GM12878 (cell line): ENCODE measurements at regions of chr11 and their contacts with region 1.

Region 1: DNA sequence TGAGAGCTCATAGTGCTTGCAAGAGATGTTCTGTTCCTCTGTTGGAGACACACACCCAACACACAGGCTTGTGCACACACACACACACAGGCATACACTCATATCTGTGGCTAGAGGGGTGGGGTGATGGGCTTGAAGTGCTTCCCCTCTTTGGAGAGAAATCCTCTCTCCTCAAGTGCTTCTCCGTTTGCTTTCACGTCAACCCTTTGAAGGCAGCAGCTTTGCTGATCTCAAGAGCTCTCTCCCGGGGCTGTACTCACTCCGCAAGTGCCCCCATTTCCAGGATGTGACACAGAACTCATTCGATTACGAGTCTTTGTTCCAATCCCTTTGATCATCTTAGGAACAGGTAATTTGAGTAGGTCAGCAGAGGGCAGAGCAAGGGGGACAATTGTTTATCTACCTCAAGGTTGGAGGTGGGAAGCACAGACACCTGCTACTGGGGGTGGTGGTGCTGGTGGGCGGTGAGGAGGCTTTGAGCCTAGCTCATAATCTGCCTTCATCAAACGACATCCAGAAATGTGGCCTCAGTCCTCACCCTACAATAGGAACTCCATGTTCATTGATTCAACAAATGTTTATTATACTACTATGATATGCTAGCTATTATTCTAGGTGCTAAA is 529.8 kb upstream of the CADM1 start:
- DNase-seq: no peak
- ATAC-seq: no peak
- H3K4me3 ChIP-seq: no peak overlapping the region
- H3K27ac ChIP-seq: no peak overlapping the region
- H3K4me1 ChIP-seq: peaks cover 6% of the 10 kb centered on the region; the same call in 1 of the 2 replicates
- H3K27me3 ChIP-seq: no peaks in the 10 kb centered on the region
- CTCF ChIP-seq: no peak
- EP300 ChIP-seq: no peak
- POLR2A ChIP-seq: no peak
- RAD21 ChIP-seq: no peak

Region 2: GRCh38 chr11:115869780-115870431 is 164.1 kb before region 1 on chr11:
- CTCF ChIA-PET with region 1: no interaction called
- POLR2A ChIA-PET with region 1: no interaction called
- RAD21 ChIA-PET with region 1: no interaction called
- SMC1A ChIA-PET with region 1: no interaction called
- in situ Hi-C with region 1: no loop called
- intact Hi-C with region 1: no loop called
- DNase-seq: peak; percentile 51
- ATAC-seq: peak; percentile 87
- H3K4me3 ChIP-seq: no peak overlapping the region
- H3K27ac ChIP-seq: no peak overlapping the region
- H3K4me1 ChIP-seq: peaks cover 49% of the 10 kb centered on the region
- H3K27me3 ChIP-seq: no peaks in the 10 kb centered on the region
- CTCF ChIP-seq: peak; percentile 80 to 90 (median 85)
- EP300 ChIP-seq: peak in 1 of 2 experiments; percentile 24; a peak in 1 of 4 replicates
- POLR2A ChIP-seq: no peak
- RAD21 ChIP-seq: peak; percentile 77

Region 3: GRCh38 chr11:115896084-115896483 is 138.0 kb before region 1 on chr11:
- CTCF ChIA-PET with region 1: no interaction called
- POLR2A ChIA-PET with region 1: no interaction called
- RAD21 ChIA-PET with region 1: no interaction called
- SMC1A ChIA-PET with region 1: no interaction called
- in situ Hi-C with region 1: no loop called
- intact Hi-C with region 1: no loop called
- DNase-seq: no peak
- ATAC-seq: peak; percentile 44
- H3K4me3 ChIP-seq: no peak overlapping the region
- H3K27ac ChIP-seq: no peak overlapping the region
- H3K4me1 ChIP-seq: peaks cover 14% of the 10 kb centered on the region
- H3K27me3 ChIP-seq: no peaks in the 10 kb centered on the region
- CTCF ChIP-seq: no peak
- EP300 ChIP-seq: no peak
- POLR2A ChIP-seq: no peak
- RAD21 ChIP-seq: no peak

Region 4: GRCh38 chr11:115996125-115996807 is 37.8 kb before region 1 on chr11:
- CTCF ChIA-PET with region 1: interaction called, 3 read pairs
- POLR2A ChIA-PET with region 1: no interaction called
- RAD21 ChIA-PET with region 1: no interaction called
- SMC1A ChIA-PET with region 1: interaction called, 3 read pairs
- in situ Hi-C with region 1: no loop called
- intact Hi-C with region 1: loop called (anchors 1 kb)
- DNase-seq: peak; percentile 89
- ATAC-seq: peak; percentile 96
- H3K4me3 ChIP-seq: no peak overlapping the region
- H3K27ac ChIP-seq: peak overlapping the region; percentile 79
- H3K4me1 ChIP-seq: peaks cover 25% of the 10 kb centered on the region
- H3K27me3 ChIP-seq: no peaks in the 10 kb centered on the region
- CTCF ChIP-seq: no peak
- EP300 ChIP-seq: peak; percentile 94 to 95; a peak in 3 of 4 replicates
- POLR2A ChIP-seq: no peak
- RAD21 ChIP-seq: no peak

Region 5: DNA sequence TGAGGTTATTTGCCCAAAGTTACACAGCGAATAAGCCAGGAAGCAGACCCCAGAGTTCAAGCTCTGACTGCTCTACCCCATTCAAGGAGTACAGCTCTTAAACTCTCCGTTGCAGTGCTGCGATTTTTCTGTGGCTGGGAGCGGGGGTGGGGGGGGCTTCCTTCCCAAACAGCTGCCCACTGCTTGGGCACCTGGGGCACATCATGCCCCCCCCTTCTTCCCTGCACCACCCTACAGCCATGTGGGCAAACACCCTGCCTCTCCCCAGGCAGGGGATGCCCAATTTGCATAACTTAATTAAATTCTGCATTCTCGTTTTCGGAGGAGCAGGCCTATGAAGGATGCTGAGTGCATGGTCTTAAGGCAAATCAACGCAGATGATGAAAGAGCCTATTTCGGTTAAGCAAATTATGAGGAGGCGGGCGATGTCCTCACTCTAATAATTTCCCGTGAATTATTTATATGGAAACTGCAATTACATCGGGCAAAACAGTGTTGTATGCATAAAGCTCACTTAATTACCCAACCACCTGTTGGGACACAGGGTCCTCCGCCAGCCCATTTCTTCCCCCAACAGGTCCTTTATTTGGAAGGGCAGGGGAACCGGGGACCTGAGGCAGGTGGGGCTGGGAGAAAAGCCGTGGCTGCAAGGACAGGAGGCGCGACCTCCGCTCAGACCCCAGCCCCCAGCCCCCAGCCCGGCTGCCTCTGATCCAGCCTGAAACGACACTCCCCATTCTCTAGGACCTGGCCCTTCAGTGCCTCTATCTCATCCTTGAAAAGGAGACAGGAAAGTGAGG is 128.2 kb after region 1 on chr11:
- CTCF ChIA-PET with region 1: no interaction called
- POLR2A ChIA-PET with region 1: no interaction called
- RAD21 ChIA-PET with region 1: no interaction called
- SMC1A ChIA-PET with region 1: no interaction called
- in situ Hi-C with region 1: no loop called
- intact Hi-C with region 1: no loop called
- DNase-seq: no peak
- ATAC-seq: no peak
- H3K4me3 ChIP-seq: no peak overlapping the region
- H3K27ac ChIP-seq: no peak overlapping the region
- H3K4me1 ChIP-seq: no peaks in the 10 kb centered on the region
- H3K27me3 ChIP-seq: no peaks in the 10 kb centered on the region
- CTCF ChIP-seq: no peak
- EP300 ChIP-seq: no peak
- POLR2A ChIP-seq: no peak
- RAD21 ChIP-seq: no peak

Region 6: GRCh38 chr11:116326146-116326679 is 292.2 kb after region 1 on chr11:
- CTCF ChIA-PET with region 1: no interaction called
- POLR2A ChIA-PET with region 1: no interaction called
- RAD21 ChIA-PET with region 1: no interaction called
- SMC1A ChIA-PET with region 1: no interaction called
- in situ Hi-C with region 1: no loop called
- intact Hi-C with region 1: no loop called
- DNase-seq: no peak
- ATAC-seq: no peak
- H3K4me3 ChIP-seq: no peak overlapping the region
- H3K27ac ChIP-seq: no peak overlapping the region
- H3K4me1 ChIP-seq: no peaks in the 10 kb centered on the region
- H3K27me3 ChIP-seq: no peaks in the 10 kb centered on the region; a peak in 3 of 4 replicates
- CTCF ChIP-seq: no peak
- EP300 ChIP-seq: no peak
- POLR2A ChIP-seq: no peak
- RAD21 ChIP-seq: no peak